ENCODE measurements at regions of chr11 and their contacts with region 1.

Region 1: GRCh38 chr11:68798221-68798813 is 43.4 kb downstream of the CPT1A start:
- DNase-seq: peak in 8 of 9 experiments; percentile 16 to 62 (median 50)
- ATAC-seq: peak; percentile 31
- H3K4me3 ChIP-seq: no peak overlapping the region
- H3K4me3 Mint-ChIP-seq: no peak overlapping the region
- H3K27ac ChIP-seq: no peak overlapping the region
- H3K27ac Mint-ChIP-seq: no peak overlapping the region
- H3K4me1 ChIP-seq: no peaks in the 10 kb centered on the region
- H3K4me1 Mint-ChIP-seq: no peaks in the 10 kb centered on the region
- H3K27me3 ChIP-seq: no peaks in the 10 kb centered on the region
- H3K27me3 Mint-ChIP-seq: no peaks in the 10 kb centered on the region
- CTCF ChIP-seq: peak; percentile 76

Region 2: DNA sequence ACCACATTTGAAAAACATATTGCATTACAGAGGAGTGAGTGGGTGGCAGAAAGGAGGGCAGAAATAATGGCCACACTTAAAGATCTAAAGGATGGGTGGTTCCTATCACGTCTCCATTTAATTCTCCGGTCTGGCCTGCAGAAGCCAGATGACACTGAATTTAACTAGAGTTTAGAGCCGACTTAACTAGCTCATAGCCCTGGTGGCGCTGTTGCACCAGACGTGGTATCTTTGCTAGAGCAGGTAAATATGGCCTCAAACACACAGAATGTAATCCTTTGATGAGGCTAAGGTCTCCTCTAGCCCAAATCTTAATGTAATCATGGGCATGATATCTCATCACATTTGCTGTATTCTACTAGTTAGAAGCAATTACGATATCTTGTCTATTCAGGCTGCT is 165.5 kb before region 1 on chr11:
- CTCF ChIA-PET with region 1: interaction called, 5 read pairs
- POLR2A ChIA-PET with region 1: no interaction called
- intact Hi-C with region 1: loop called in 1 of 2 experiments (anchors 2 kb)
- DNase-seq: peak in 8 of 9 experiments; percentile 12 to 67 (median 50)
- ATAC-seq: no peak
- H3K4me3 ChIP-seq: no peak overlapping the region
- H3K4me3 Mint-ChIP-seq: no peak overlapping the region
- H3K27ac ChIP-seq: no peak overlapping the region
- H3K27ac Mint-ChIP-seq: no peak overlapping the region
- H3K4me1 ChIP-seq: no peaks in the 10 kb centered on the region
- H3K4me1 Mint-ChIP-seq: no peaks in the 10 kb centered on the region
- H3K27me3 ChIP-seq: no peaks in the 10 kb centered on the region
- H3K27me3 Mint-ChIP-seq: peaks cover 6% of the 10 kb centered on the region
- CTCF ChIP-seq: peak; percentile 17

Region 3: DNA sequence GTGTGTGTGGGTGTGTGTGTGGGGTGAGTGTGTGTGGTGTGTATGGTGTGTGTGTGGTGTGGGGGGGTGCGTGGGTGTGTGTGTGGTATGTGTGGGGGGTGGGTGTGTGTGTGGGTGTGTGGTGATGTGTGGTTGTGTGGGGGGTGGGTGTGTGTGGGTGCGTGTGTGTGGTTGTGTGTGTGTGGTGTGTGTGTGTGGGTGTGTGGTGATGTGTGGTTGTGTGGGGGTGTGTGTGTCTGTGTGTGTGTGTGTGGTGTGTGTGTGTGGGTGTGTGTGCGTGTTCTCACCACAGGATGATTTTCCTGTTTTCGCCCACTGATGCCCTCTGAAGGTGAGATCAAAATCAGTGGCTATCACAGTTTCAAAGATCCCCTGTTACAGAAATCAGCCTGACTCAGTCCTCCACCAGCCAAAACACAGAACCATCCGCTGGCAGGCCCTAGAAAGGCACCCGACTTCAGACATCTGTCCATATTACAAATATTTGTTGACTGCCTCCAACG is 18.7 kb after region 1 on chr11:
- CTCF ChIA-PET with region 1: interaction called, 16 read pairs
- POLR2A ChIA-PET with region 1: no interaction called
- intact Hi-C with region 1: no loop called
- DNase-seq: peak in 3 of 9 experiments; percentile 15 to 49 (median 30)
- ATAC-seq: no peak
- H3K4me3 ChIP-seq: no peak overlapping the region
- H3K4me3 Mint-ChIP-seq: peak overlapping the region; percentile 13
- H3K27ac ChIP-seq: peak overlapping the region in 1 of 2 experiments; percentile 44
- H3K27ac Mint-ChIP-seq: peak overlapping the region; percentile 73
- H3K4me1 ChIP-seq: peaks cover 21% of the 10 kb centered on the region
- H3K4me1 Mint-ChIP-seq: peaks cover 32% of the 10 kb centered on the region
- H3K27me3 ChIP-seq: no peaks in the 10 kb centered on the region
- H3K27me3 Mint-ChIP-seq: no peaks in the 10 kb centered on the region
- CTCF ChIP-seq: no peak